GM23248 (cell line): ENCODE measurements at regions of chr19 and their contacts with region 1.

Region 1: DNA sequence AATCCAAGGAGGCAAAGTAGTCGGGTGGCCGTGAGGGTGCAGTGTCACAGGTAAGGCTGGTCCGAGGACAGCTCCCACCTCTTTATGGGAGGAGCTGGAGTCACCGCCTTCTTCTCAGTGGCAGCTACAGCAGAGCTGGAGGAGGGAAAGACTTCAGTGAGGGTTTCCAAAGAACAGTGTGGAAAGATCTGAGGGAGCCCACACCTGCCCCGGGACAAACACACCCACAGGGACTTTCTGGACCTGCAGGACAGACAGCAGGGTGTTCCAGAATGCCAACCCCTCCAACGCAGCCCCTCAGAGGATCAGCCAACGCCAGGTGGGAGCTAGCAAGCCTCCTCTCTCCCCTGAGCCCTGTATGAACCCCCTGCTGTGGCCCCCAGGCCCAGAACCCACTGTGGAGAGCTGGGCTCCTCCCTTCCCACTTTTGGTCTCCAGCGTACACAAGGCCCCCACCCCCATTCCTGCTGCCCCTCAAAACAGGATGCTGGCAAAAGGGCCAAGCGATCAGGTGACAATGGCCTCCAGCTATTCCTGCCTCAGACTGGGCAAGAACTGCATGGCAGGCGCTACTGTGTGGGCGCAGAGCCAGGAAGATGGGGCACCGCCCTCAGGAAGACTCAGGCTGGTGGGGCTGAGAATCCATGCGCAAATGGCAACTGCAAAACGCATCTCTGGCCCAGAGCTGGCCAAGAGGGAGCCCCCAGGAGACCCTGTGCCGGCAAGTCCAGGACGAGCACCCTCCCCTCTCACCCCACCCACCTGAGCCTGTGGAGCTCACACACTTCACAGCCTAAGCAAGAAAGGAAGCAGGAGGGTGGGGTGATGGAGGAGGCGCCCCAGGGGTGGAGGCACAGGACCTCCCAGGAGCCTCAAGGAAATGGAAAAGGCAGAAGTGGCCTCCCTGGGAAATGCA is 3.6 kb upstream of the CD320 start:
- DNase-seq: no peak
- H3K4me3 ChIP-seq: no peak overlapping the region
- H3K27ac ChIP-seq: no peak overlapping the region
- H3K4me1 ChIP-seq: peaks cover 15% of the 10 kb centered on the region
- H3K27me3 ChIP-seq: no peaks in the 10 kb centered on the region

Region 2: GRCh38 chr19:8269724-8270123 is 42.0 kb before region 1 on chr19:
- in situ Hi-C with region 1: loop called (anchors 5 kb)
- DNase-seq: no peak
- H3K4me3 ChIP-seq: no peak overlapping the region
- H3K27ac ChIP-seq: no peak overlapping the region
- H3K4me1 ChIP-seq: no peaks in the 10 kb centered on the region
- H3K27me3 ChIP-seq: no peaks in the 10 kb centered on the region

Region 3: GRCh38 chr19:8386990-8387389 is 75.3 kb after region 1 on chr19:
- in situ Hi-C with region 1: no loop called
- DNase-seq: no peak
- H3K4me3 ChIP-seq: no peak overlapping the region
- H3K27ac ChIP-seq: no peak overlapping the region
- H3K4me1 ChIP-seq: peaks cover 20% of the 10 kb centered on the region
- H3K27me3 ChIP-seq: no peaks in the 10 kb centered on the region